WTC11 (cell line): ENCODE measurements at regions of chr6 and their contacts with region 1.

Region 1: DNA sequence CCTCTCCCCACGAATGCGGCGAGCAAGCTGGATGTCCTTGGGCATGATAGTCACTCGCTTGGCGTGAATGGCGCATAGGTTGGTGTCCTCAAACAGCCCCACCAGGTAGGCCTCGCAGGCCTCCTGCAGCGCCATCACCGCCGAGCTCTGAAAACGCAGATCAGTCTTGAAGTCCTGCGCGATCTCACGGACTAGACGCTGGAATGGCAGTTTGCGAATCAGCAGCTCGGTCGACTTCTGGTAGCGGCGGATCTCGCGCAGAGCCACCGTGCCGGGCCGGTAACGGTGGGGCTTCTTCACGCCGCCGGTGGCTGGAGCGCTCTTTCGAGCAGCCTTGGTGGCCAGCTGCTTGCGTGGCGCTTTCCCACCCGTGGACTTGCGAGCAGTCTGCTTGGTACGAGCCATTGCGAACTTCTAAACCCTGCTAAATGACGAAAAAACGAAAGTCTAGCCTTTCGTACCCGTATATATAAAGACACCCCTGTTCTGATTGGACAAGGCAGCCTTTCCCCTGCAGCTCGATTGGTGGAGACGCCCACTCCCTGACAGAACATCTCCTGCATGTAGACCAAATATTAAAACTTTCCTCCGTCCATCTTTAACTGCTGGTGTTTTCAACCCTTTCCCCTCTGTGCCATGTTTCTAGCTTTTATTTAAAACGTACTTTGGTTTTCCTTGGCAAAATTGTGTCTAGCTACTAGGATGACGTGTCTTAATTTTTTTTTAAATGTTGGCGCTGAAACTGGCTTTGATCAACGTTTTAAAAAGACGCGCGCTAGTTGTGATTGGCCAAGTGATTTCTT is 109.8 kb downstream of the HFE start:
- DNase-seq: peak; percentile 75
- ATAC-seq: peak; percentile 43
- H3K4me3 Mint-ChIP-seq: peak overlapping the region; percentile 99
- H3K27ac Mint-ChIP-seq: peak overlapping the region; percentile 100
- H3K4me1 Mint-ChIP-seq: peaks cover 39% of the 10 kb centered on the region
- H3K27me3 Mint-ChIP-seq: no peaks in the 10 kb centered on the region
- CTCF ChIP-seq: no peak

Region 2: GRCh38 chr6:25842526-25843277 is 354.3 kb before region 1 on chr6:
- CTCF ChIA-PET with region 1: no interaction called
- POLR2A ChIA-PET with region 1: no interaction called
- DNase-seq: no peak
- ATAC-seq: no peak
- H3K4me3 Mint-ChIP-seq: no peak overlapping the region
- H3K27ac Mint-ChIP-seq: no peak overlapping the region
- H3K4me1 Mint-ChIP-seq: no peaks in the 10 kb centered on the region
- H3K27me3 Mint-ChIP-seq: no peaks in the 10 kb centered on the region
- CTCF ChIP-seq: no peak

Region 3: GRCh38 chr6:26025894-26026832 is 170.9 kb before region 1 on chr6:
- CTCF ChIA-PET with region 1: no interaction called
- POLR2A ChIA-PET with region 1: interaction called, 96 read pairs
- DNase-seq: peak; percentile 95
- ATAC-seq: peak; percentile 12
- H3K4me3 Mint-ChIP-seq: peak overlapping the region; percentile 92
- H3K27ac Mint-ChIP-seq: peak overlapping the region; percentile 98
- H3K4me1 Mint-ChIP-seq: peaks cover 73% of the 10 kb centered on the region
- H3K27me3 Mint-ChIP-seq: no peaks in the 10 kb centered on the region
- CTCF ChIP-seq: peak; percentile 60

Region 4: DNA sequence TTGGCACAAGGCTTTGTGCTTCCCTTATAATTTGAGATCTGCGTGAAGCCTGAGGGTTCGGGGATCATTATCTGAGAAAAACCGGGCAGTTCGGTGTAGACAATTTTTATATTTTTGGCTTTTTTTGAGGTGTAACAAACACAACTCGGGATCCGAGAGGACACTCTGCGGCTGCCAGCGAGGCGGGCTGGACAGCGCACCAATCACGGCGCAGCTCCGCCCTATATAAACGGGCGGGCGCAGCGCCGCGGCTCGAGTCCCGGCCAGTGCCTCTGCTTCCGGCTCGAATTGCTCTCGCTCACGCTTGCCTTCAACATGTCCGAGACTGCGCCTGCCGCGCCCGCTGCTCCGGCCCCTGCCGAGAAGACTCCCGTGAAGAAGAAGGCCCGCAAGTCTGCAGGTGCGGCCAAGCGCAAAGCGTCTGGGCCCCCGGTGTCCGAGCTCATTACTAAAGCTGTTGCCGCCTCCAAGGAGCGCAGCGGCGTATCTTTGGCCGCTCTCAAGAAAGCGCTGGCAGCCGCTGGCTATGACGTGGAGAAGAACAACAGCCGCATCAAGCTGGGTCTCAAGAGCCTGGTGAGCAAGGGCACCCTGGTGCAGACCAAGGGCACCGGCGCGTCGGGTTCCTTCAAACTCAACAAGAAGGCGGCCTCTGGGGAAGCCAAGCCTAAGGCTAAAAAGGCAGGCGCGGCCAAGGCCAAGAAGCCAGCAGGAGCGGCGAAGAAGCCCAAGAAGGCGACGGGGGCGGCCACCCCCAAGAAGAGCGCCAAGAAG is 40.8 kb before region 1 on chr6:
- CTCF ChIA-PET with region 1: no interaction called
- POLR2A ChIA-PET with region 1: interaction called, 199 read pairs
- DNase-seq: peak; percentile 81
- ATAC-seq: peak; percentile 47
- H3K4me3 Mint-ChIP-seq: peak overlapping the region; percentile 84
- H3K27ac Mint-ChIP-seq: peak overlapping the region; percentile 98
- H3K4me1 Mint-ChIP-seq: peaks cover 22% of the 10 kb centered on the region
- H3K27me3 Mint-ChIP-seq: peaks cover 3% of the 10 kb centered on the region; the same call in 1 of the 2 replicates
- CTCF ChIP-seq: no peak

Region 5: GRCh38 chr6:26234421-26235296 is 37.6 kb after region 1 on chr6:
- CTCF ChIA-PET with region 1: no interaction called
- POLR2A ChIA-PET with region 1: interaction called, 100 read pairs
- DNase-seq: no peak
- ATAC-seq: peak; percentile 70
- H3K4me3 Mint-ChIP-seq: peak overlapping the region; percentile 94
- H3K27ac Mint-ChIP-seq: peak overlapping the region; percentile 99
- H3K4me1 Mint-ChIP-seq: peaks cover 33% of the 10 kb centered on the region
- H3K27me3 Mint-ChIP-seq: no peaks in the 10 kb centered on the region
- CTCF ChIP-seq: no peak

Region 6: DNA sequence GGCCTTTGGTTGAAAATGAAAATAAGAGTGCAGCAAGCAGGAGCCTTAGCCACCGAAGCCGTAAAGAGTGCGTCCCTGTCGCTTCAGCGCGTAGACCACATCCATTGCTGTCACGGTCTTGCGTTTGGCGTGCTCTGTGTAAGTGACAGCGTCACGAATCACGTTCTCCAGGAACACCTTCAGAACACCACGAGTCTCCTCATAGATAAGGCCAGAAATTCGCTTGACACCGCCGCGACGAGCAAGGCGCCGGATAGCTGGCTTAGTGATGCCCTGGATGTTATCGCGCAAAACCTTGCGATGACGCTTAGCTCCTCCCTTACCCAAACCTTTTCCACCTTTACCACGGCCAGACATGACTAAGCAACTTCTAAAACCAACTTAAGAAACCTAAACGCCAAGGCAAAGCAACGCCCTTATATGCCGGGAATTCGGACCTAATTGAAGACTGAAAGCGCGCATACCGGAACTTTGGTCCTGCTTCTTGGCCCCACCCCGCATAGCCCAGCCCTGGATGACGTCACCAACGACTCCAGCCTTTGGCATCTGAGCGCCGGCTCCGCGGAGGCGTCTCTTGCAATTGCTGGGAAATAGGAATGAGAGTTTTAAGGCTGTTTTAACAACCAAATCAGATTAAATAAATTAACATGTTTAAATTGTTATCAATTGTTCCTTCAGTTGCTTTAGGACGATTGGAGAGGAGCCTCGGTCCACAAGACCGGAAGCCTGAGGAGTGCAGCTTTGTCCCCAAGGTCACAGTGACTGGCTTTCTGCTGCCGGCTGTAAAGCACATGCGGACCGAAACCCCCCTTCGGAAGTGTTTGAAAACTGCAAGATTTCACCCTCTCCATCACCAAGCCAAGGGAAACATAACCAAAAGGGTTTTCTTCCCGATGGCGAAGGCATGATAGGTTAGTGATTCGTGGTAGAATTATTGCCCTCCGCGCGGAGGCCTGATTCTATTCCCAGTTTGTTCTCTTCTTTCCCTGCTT is 88.4 kb after region 1 on chr6:
- CTCF ChIA-PET with region 1: no interaction called
- POLR2A ChIA-PET with region 1: interaction called, 25 read pairs
- DNase-seq: peak; percentile 96
- ATAC-seq: peak; percentile 73
- H3K4me3 Mint-ChIP-seq: peak overlapping the region; percentile 97
- H3K27ac Mint-ChIP-seq: peak overlapping the region; percentile 100
- H3K4me1 Mint-ChIP-seq: peaks cover 16% of the 10 kb centered on the region
- H3K27me3 Mint-ChIP-seq: peaks cover 4% of the 10 kb centered on the region
- CTCF ChIP-seq: no peak

Region 7: DNA sequence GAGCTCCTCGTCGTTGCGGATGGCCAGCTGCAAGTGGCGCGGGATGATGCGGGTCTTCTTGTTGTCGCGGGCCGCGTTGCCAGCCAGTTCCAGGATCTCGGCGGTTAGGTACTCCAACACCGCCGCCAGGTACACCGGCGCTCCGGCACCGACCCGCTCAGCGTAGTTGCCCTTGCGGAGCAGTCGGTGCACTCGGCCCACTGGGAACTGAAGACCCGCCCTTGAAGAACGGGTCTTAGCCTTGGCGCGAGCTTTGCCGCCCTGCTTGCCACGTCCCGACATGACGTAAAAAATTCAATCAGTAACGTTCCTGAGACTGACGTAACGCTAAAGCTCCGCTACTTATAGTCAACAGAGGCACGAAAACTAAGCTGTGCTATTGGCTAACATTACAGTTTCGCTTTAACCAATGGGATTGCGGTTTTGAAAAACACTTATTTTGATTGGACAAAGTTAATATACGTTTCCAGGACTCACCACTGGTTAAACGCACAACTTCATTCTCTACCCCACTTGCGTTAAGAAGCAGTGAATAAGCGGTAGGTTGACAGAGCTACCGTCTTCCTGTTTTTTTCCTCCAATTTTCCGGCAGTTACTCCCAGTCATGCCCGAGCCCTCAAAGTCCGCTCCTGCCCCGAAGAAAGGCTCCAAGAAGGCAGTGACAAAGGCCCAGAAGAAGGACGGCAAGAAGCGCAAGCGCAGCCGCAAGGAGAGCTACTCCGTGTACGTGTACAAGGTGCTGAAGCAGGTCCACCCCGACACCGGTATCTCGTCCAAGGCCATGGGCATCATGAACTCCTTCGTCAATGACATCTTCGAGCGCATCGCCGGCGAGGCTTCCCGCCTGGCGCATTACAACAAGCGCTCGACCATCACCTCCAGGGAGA is 1641.3 kb after region 1 on chr6:
- CTCF ChIA-PET with region 1: no interaction called
- POLR2A ChIA-PET with region 1: interaction called, 15 read pairs
- DNase-seq: peak; percentile 84
- ATAC-seq: peak; percentile 84
- H3K4me3 Mint-ChIP-seq: no peak overlapping the region
- H3K27ac Mint-ChIP-seq: no peak overlapping the region
- H3K4me1 Mint-ChIP-seq: peaks cover 28% of the 10 kb centered on the region
- H3K27me3 Mint-ChIP-seq: no peaks in the 10 kb centered on the region
- CTCF ChIP-seq: no peak